Psoas muscle (tissue), 8 donors: ENCODE measurements at regions of chr16 and their contacts with region 1.

Region 1: GRCh38 chr16:3129137-3130131 is 5.4 kb upstream of the ZNF213 start:
- DNase-seq: peak; percentile 58 to 83
- ATAC-seq: peak; percentile 64 to 85 (median 76)
- H3K4me3 ChIP-seq: peak overlapping the region; percentile 57
- H3K27ac ChIP-seq: peak overlapping the region; percentile 59
- H3K4me1 ChIP-seq: peaks cover 28% of the 10 kb centered on the region
- H3K27me3 ChIP-seq: no peaks in the 10 kb centered on the region
- CTCF ChIP-seq: peak; percentile 89

Region 2: DNA sequence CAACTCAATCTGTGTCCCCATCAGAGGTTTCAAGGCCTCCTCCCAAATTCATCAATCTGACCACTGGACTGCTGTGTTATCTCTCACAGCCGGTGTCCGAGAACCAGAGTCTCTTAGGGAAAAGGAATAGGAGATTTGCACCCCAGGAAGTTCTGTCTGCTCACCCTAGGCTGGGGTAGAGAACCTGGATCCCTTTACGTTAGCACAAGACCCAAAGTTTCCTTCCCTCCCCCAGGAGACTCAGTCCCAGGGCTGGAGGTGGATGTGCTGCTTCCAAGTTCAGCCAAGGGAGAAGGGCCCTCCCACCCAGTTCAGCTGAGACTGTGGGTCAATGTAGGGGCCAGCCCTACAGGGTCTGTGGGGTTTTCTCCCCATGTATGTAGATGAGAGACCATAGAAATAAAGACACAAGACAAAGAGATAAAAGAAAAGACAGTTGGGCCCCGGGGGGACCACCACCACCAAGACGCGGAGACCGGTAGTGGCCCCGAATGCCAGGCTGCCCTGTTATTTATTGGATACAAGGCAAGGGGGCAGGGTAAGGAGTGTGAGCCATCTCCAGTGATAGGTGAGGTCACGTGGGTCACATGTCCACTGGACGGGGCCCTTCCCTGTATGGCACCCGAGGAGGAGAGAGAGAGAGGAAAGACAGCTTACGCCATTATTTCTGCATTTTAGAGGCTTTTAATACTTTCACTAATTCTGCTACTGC is 35.8 kb after region 1 on chr16:
- intact Hi-C with region 1: loop called in 1 of 2 experiments (anchors 5 kb)
- DNase-seq: no peak
- ATAC-seq: peak in 1 of 4 donors; percentile 29
- H3K4me3 ChIP-seq: peak overlapping the region; percentile 52
- H3K27ac ChIP-seq: no peak overlapping the region
- H3K4me1 ChIP-seq: peaks cover 4% of the 10 kb centered on the region
- H3K27me3 ChIP-seq: peaks cover 0 to 49% (median 14%) of the 10 kb centered on the region in 3 donors
- CTCF ChIP-seq: no peak